Activated CD4-positive, alpha-beta T cell treated with anti-CD3 and anti-CD28 coated beads for 36 hours (primary cell): ENCODE measurements at regions of chrX and their contacts with region 1.

Region 1: GRCh38 chrX:63835361-63835760 is 50.3 kb upstream of the ARHGEF9 start:
- DNase-seq: no peak
- ATAC-seq: no peak
- H3K4me3 Mint-ChIP-seq: no peak overlapping the region
- H3K27ac Mint-ChIP-seq: no peak overlapping the region
- H3K4me1 Mint-ChIP-seq: no peaks in the 10 kb centered on the region
- H3K27me3 Mint-ChIP-seq: no peaks in the 10 kb centered on the region

Region 2: DNA sequence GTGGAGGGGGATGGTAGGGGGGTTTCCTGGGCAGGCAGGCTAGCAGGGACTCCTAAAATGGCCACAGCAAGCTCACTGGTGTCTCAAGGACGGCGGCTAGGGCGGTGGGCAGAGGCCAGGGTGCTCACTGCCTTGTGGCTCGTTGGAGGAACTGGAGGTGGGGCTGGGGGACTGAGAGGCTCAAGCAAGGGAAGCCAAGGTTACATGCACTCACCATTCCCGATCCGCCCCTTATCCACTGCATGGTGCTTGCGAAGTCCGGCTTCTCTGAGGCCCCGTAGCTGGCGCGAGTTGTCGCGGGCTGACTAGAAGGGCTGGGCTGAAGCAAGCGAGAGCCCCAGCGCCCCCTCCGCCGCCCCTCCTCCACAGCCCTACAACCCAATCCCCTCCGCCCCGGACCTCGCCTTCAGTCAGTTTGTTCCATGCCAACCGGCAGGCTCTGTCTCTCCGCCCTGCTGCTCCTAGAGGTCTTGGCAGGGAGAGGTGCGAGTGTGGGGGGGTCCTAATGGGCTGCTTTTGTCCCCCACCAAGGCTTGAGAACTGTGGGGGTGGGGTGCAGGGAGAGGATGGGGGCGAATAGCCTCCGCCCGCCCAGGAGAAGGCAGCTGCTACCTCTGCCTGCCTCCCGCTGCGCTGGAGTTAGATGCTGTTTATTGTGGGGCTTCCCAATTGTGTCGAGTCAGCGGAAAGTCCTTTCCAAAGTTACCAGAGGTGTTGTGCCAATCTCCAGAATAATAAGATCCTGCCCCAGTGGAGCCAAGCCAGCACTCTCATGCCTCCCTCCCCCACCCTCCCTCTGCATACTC is 50.3 kb before region 1 on chrX and contains the start of gene ARHGEF9:
- CTCF ChIA-PET with region 1: no interaction called
- POLR2A ChIA-PET with region 1: no interaction called
- intact Hi-C with region 1: loop called in 1 of 2 experiments (anchors 10 kb)
- DNase-seq: peak; percentile 12
- ATAC-seq: peak; percentile 26
- H3K4me3 Mint-ChIP-seq: peak within 1 kb of the TSS; percentile 39
- H3K27ac Mint-ChIP-seq: no peak within 1 kb of the TSS
- H3K4me1 Mint-ChIP-seq: peaks cover 1% of the 10 kb centered on the region
- H3K27me3 Mint-ChIP-seq: peaks cover 1% of the 10 kb centered on the region
- total RNA-seq, gene ARHGEF9: 16.0 to 22.0 TPM